Heart right ventricle (tissue), 16 donors: ENCODE measurements at regions of chr2 and their contacts with region 1.

Region 1: DNA sequence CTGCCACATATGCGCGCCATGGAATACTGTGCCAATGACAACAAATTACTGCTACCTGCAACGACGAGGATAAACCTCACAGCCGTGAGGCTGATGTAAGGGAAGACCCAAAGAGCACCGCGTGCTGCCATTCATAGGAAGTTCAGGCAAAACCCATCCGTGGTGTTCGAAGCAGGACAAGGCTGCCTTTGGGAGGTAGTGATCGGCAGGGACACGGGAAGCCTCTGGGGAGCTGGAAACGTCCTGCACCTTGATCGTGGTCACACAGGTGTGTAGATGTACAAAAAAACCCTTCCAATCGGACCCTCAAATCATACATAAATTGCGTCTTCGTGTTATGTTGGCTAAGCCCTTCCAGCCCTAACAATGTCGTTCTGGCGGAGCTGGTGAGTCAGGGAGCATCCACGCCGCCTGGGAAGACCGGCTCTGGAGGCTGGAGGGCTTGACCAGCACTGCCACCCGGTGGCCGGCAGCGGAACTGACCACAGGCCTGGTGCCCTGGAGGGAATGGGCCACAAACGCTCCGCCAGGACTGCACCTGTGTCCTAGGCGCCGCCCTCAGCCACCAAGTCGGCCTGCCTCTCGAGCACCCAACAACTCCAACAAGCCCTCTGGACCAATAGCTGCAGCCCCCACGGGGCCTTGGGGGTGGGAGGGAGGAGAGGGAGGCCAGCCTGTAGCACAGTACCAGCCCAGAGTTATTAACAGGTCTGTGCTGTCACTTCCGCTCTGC is 4.1 kb upstream of the NEURL3 start:
- DNase-seq: peak; percentile 88 to 90
- ATAC-seq: peak; percentile 88 to 94 (median 92)
- H3K4me3 ChIP-seq: no peak overlapping the region
- H3K27ac ChIP-seq: peak overlapping the region in 1 of 10 donors; percentile 5
- H3K4me1 ChIP-seq: peaks cover 5 to 29% (median 15%) of the 10 kb centered on the region in 9 donors
- H3K27me3 ChIP-seq: no peaks in the 10 kb centered on the region
- CTCF ChIP-seq: peak; percentile 95 to 100 (median 98)

Region 2: GRCh38 chr2:96145036-96145847 is 364.0 kb before region 1 on chr2 and contains the start of gene DUSP2:
- intact Hi-C with region 1: loop called in 2 of 10 experiments (anchors 5 to 10 kb)
- DNase-seq: peak; percentile 64 to 75
- ATAC-seq: peak; percentile 82 to 88 (median 86)
- H3K4me3 ChIP-seq: peak within 1 kb of the TSS; percentile 32 to 68 (median 56)
- H3K27ac ChIP-seq: peak within 1 kb of the TSS in 9 of 10 donors; percentile 11 to 89 (median 52)
- H3K4me1 ChIP-seq: peaks cover 0 to 62% (median 39%) of the 10 kb centered on the region in 9 donors
- H3K27me3 ChIP-seq: peaks cover 0 to 5% (median 0%) of the 10 kb centered on the region in 7 donors
- CTCF ChIP-seq: peak in 2 of 9 donors; percentile 4 to 23
- total RNA-seq, gene DUSP2: 0.61 to 6.8 (median 2.5) TPM

Region 3: DNA sequence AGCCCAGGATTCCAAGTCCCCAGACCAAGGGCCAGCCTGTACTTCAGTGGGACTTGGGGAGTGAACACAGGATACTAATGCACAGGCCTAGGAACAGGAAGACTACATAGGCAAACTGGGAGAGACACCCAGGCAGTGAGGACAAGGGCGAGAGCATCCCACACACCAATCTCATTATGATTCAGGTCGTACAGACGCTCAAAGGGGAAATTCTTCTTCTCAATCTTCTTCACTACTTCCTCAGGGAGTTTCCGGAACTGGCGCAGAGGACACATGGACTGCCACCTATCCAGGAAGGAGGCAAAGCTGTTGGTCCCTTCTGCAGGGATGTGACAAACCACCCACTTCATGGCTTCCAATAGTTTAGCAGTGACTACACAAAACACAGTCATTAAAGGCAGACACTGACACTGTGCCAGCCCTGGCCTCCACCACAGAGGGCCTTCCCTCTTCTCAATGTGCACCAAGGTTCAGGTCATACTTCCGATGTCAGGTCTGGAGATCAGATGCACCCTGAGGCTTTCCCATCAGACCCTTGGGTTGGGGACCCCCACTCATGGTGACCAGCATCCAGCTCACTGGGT is 221.9 kb before region 1 on chr2:
- intact Hi-C with region 1: no loop called
- DNase-seq: no peak
- ATAC-seq: no peak
- H3K4me3 ChIP-seq: no peak overlapping the region
- H3K27ac ChIP-seq: no peak overlapping the region
- H3K4me1 ChIP-seq: no peaks in the 10 kb centered on the region
- H3K27me3 ChIP-seq: no peaks in the 10 kb centered on the region
- CTCF ChIP-seq: no peak

Region 4: DNA sequence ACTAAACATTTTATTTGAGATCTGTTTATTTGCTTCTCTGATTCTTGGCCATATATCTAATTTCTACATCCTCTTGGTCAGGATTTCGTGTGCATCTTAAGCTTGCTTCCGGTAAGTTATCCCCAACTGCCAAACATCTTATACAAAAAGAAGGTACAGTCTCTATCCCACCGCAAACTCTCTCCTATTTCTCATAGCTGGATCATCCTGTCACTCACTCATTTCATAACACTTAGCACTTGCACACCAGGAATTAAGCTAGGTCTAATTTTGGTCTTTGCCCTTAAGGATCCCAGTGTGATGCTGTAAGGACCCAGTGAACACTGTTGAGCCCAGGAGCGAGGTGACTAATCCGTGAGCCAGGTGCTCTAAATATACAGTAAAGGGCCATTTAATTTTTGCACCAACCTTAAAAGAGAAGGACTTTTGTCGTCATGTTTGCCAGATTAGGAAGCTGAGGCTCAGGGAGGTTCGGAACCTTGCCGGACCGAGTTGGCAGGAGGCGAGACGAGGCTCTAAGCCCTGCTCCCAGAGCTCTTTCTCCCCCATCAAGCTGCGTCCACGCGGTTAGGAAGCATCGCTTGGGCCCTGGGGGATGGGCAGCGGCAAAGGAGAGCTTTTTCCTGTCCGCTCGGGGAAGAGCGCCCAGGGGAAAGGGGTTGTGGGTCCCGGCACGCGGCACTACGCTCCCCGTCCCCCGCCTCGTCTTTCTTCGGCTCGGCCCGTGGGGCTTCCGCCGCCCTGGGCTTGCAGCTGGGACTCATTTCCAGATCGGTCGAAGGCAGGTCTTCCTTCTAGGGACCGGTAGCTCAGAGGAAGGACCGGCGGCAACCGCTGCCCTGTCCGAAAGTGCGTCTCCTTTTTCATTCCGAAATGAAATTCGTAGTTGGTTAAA is 188.3 kb before region 1 on chr2:
- intact Hi-C with region 1: loop called in 1 of 10 experiments (anchors 1 kb)
- DNase-seq: peak in 1 of 2 donors; percentile 47
- ATAC-seq: peak; percentile 46 to 75 (median 64)
- H3K4me3 ChIP-seq: peak overlapping the region; percentile 47 to 80 (median 71)
- H3K27ac ChIP-seq: peak overlapping the region in 9 of 10 donors; percentile 21 to 84 (median 71)
- H3K4me1 ChIP-seq: peaks cover 2 to 63% (median 20%) of the 10 kb centered on the region in 9 donors
- H3K27me3 ChIP-seq: peaks cover 0 to 57% (median 34%) of the 10 kb centered on the region in 7 donors
- CTCF ChIP-seq: no peak

Region 5: DNA sequence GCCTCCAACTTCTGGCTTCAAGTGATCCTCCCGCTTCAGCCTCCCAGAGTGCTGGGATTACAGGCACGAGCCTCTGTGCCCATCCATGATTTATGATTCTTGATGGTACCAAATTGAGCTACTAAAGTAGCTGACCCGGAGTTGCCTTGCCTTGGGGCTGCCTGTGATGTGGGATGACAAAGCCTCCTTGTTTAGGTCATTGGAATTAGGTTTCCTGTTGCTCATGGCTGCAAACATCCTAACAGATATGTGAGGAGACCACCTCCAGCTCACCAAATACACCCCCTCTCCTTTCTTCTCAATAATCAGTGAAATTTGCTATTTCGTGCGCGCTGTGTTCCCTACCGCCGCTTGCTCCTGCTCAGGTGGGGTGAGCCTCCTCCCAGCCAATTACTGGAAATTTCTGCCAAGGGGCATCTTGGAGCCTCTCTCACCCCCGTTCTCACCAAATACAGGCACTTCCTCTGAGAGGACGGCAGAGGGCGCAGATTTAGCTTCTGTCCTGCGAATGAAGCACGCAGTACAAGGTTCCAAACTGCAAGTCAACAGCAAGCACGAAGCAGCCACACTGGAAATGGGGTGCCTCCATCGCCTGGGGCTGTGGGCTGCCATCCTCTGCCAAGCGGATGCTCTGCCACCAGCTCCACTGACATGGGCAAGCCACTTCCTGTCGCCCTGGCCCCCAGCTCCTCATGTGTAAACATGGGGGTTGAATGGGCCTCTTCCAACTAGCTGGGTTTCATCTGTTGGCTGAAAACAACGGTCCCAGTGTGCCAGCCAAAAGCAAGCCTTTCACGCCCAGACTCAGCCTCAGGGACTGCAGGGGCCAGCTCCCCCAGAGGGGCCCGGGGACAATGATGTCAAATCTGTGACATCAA is 102.0 kb before region 1 on chr2:
- intact Hi-C with region 1: loop called (anchors 1 to 2 kb)
- DNase-seq: peak; percentile 38 to 67
- ATAC-seq: peak; percentile 34 to 75 (median 66)
- H3K4me3 ChIP-seq: no peak overlapping the region
- H3K27ac ChIP-seq: peak overlapping the region in 5 of 10 donors; percentile 46 to 66 (median 62)
- H3K4me1 ChIP-seq: peaks cover 9 to 33% (median 27%) of the 10 kb centered on the region in 9 donors
- H3K27me3 ChIP-seq: no peaks in the 10 kb centered on the region
- CTCF ChIP-seq: peak; percentile 74 to 90 (median 83)